IMR-90 (cell line): ENCODE measurements at regions of chr13 and their contacts with region 1.

Region 1: DNA sequence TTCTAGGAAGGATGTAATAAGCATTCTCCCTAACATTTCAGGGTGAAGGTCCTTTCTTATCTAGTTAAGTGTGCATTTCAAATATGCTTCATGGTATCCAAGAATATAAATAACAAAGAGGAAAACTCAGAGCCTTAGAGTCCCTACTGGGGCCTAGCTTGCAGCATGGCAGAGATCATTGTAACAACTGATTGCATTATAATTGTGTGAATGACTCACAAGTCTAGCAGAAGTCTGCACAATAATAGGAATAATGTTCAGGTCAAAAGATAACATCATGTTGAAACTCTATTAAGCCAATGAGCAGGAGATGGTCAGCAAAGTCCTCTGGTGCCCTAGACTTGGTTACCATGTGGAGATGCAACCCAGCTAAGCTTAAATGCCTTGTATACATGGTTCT is 3.4 kb downstream of the POSTN start:
- DNase-seq: peak; percentile 47
- ATAC-seq: peak; percentile 48
- H3K4me3 ChIP-seq: no peak overlapping the region
- H3K27ac ChIP-seq: no peak overlapping the region
- H3K4me1 ChIP-seq: peaks cover 3% of the 10 kb centered on the region; the same call in 1 of the 2 replicates
- H3K27me3 ChIP-seq: no peaks in the 10 kb centered on the region
- CTCF ChIP-seq: no peak
- POLR2A ChIP-seq: no peak
- RAD21 ChIP-seq: no peak

Region 2: DNA sequence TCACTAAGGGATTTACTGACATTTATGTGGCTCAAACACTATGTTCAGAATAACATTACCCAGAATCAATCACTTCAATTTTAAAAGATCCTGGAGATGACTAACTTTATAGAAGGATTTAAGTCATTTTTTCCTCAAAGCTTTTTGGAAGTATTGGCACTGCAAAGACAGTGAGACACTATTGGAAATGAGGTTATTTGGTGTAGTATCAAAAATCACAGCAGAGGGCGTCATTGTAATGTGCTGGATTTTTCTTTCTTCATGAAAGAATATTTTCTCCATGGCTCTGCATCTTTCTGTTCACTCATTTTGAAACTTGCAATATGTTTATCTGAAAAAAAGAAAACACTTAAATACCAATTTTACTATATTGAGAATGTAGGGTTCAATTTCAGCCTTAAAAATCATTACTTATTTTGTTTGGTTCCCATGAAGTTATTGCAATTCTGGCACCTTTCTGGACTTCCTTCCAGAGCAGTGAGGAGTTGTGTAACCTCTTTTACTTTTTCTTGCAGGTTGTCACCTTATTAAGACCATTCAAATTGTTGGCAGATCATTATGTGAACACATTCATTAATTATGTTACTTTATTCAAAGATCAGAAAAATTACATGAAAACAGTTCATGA is 486.0 kb before region 1 on chr13:
- CTCF ChIA-PET with region 1: no interaction called
- POLR2A ChIA-PET with region 1: no interaction called
- dilution Hi-C with region 1: no loop called
- in situ Hi-C with region 1: loop called (anchors 5 kb)
- intact Hi-C with region 1: no loop called
- DNase-seq: peak; percentile 62
- ATAC-seq: peak; percentile 67
- H3K4me3 ChIP-seq: no peak overlapping the region
- H3K27ac ChIP-seq: no peak overlapping the region
- H3K4me1 ChIP-seq: no peaks in the 10 kb centered on the region
- H3K27me3 ChIP-seq: no peaks in the 10 kb centered on the region
- CTCF ChIP-seq: peak; percentile 89
- POLR2A ChIP-seq: 0 out of 2 replicates have a peak, but pooled peaks have one; percentile 56
- RAD21 ChIP-seq: peak; percentile 96

Region 3: GRCh38 chr13:37194428-37194861 is 400.7 kb before region 1 on chr13:
- CTCF ChIA-PET with region 1: no interaction called
- POLR2A ChIA-PET with region 1: no interaction called
- dilution Hi-C with region 1: no loop called
- in situ Hi-C with region 1: no loop called
- intact Hi-C with region 1: loop called (anchors 10 kb)
- DNase-seq: peak; percentile 82
- ATAC-seq: peak; percentile 73
- H3K4me3 ChIP-seq: no peak overlapping the region
- H3K27ac ChIP-seq: no peak overlapping the region
- H3K4me1 ChIP-seq: peaks cover 8% of the 10 kb centered on the region; the same call in 1 of the 2 replicates
- H3K27me3 ChIP-seq: no peaks in the 10 kb centered on the region
- CTCF ChIP-seq: no peak
- POLR2A ChIP-seq: no peak
- RAD21 ChIP-seq: no peak

Region 4: DNA sequence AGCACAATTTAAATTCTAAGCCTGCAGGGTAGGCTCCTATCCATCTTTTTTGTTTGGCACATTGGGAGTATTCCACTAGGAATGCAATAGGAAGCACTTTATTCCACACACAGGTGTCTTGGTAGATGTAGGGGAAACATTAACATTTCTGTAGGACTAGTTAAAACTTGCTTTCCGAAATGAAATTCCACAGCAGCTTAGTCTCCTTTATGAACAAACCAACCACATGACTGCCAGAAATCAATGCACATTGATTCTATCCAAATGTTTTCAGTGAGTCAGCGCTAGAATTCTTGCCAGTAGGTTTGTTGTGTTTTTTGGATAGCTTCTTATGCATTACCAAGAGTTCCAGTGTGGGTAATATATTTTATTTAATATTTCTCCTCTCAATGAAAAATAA is 281.8 kb before region 1 on chr13:
- CTCF ChIA-PET with region 1: no interaction called
- POLR2A ChIA-PET with region 1: no interaction called
- dilution Hi-C with region 1: no loop called
- in situ Hi-C with region 1: no loop called
- intact Hi-C with region 1: loop called (anchors 5 kb)
- DNase-seq: peak; percentile 92
- ATAC-seq: peak; percentile 85
- H3K4me3 ChIP-seq: no peak overlapping the region
- H3K27ac ChIP-seq: peak overlapping the region; percentile 64; the same call in 1 of the 2 replicates
- H3K4me1 ChIP-seq: peaks cover 4% of the 10 kb centered on the region; the same call in 1 of the 2 replicates
- H3K27me3 ChIP-seq: no peaks in the 10 kb centered on the region
- CTCF ChIP-seq: no peak
- POLR2A ChIP-seq: no peak
- RAD21 ChIP-seq: no peak

Region 5: GRCh38 chr13:37412241-37412921 is 182.8 kb before region 1 on chr13:
- CTCF ChIA-PET with region 1: no interaction called
- POLR2A ChIA-PET with region 1: no interaction called
- dilution Hi-C with region 1: no loop called
- in situ Hi-C with region 1: no loop called
- intact Hi-C with region 1: loop called (anchors 5 kb)
- DNase-seq: peak; percentile 74
- ATAC-seq: peak; percentile 68
- H3K4me3 ChIP-seq: no peak overlapping the region
- H3K27ac ChIP-seq: no peak overlapping the region
- H3K4me1 ChIP-seq: peaks cover 3% of the 10 kb centered on the region
- H3K27me3 ChIP-seq: no peaks in the 10 kb centered on the region
- CTCF ChIP-seq: no peak
- POLR2A ChIP-seq: no peak
- RAD21 ChIP-seq: no peak

Region 6: GRCh38 chr13:37429976-37430375 is 165.2 kb before region 1 on chr13:
- CTCF ChIA-PET with region 1: no interaction called
- POLR2A ChIA-PET with region 1: no interaction called
- dilution Hi-C with region 1: no loop called
- in situ Hi-C with region 1: no loop called
- intact Hi-C with region 1: no loop called
- DNase-seq: peak; percentile 98
- ATAC-seq: peak; percentile 95
- H3K4me3 ChIP-seq: no peak overlapping the region
- H3K27ac ChIP-seq: no peak overlapping the region
- H3K4me1 ChIP-seq: peaks cover 4% of the 10 kb centered on the region; the same call in 1 of the 2 replicates
- H3K27me3 ChIP-seq: no peaks in the 10 kb centered on the region
- CTCF ChIP-seq: no peak
- POLR2A ChIP-seq: no peak
- RAD21 ChIP-seq: peak; percentile 29

Region 7: DNA sequence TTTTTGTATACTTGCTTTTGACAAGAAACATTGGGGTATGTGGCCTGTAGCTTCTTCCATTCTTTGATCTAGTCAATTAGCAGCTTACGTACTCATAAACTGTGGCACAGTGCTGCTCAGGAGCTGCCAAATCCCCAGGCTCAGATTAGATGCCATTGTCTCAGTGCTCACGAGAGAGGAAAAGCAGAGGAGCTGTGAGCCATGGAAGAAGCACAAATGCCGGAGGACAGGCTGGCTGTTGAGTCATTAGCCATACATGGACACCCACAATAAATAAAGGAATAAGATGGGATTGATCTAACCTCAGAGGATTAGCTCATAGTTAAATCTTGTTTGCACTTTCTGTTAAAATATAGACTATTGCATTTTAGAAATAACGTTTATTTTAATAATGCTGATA is 118.3 kb before region 1 on chr13:
- CTCF ChIA-PET with region 1: no interaction called
- POLR2A ChIA-PET with region 1: no interaction called
- dilution Hi-C with region 1: no loop called
- in situ Hi-C with region 1: no loop called
- intact Hi-C with region 1: loop called (anchors 5 kb)
- DNase-seq: peak; percentile 83
- ATAC-seq: peak; percentile 81
- H3K4me3 ChIP-seq: no peak overlapping the region
- H3K27ac ChIP-seq: peak overlapping the region; percentile 69
- H3K4me1 ChIP-seq: peaks cover 6% of the 10 kb centered on the region
- H3K27me3 ChIP-seq: no peaks in the 10 kb centered on the region
- CTCF ChIP-seq: no peak
- POLR2A ChIP-seq: no peak
- RAD21 ChIP-seq: no peak

Region 8: GRCh38 chr13:37640499-37640898 is 45.3 kb after region 1 on chr13:
- CTCF ChIA-PET with region 1: no interaction called
- POLR2A ChIA-PET with region 1: no interaction called
- dilution Hi-C with region 1: no loop called
- in situ Hi-C with region 1: no loop called
- intact Hi-C with region 1: no loop called
- DNase-seq: peak; percentile 86
- ATAC-seq: peak; percentile 91
- H3K4me3 ChIP-seq: no peak overlapping the region
- H3K27ac ChIP-seq: no peak overlapping the region
- H3K4me1 ChIP-seq: peaks cover 4% of the 10 kb centered on the region
- H3K27me3 ChIP-seq: no peaks in the 10 kb centered on the region
- CTCF ChIP-seq: peak; percentile 87
- POLR2A ChIP-seq: 0 out of 2 replicates have a peak, but pooled peaks have one; percentile 38
- RAD21 ChIP-seq: peak; percentile 94